Activated T-helper 1 cell treated with anti-CD3 and anti-CD28 coated beads, Interleukin-12 subunit alpha, Interleukin-12 subunit beta, Interleukin-2, Interleukin-4 antibody, amounts not matched to agents 30 ng/mL and 10 ng/mL and 1 ng/mL, durations not matched to agents 14 hours and 24 hours and 36 hours (primary cell): ENCODE measurements at regions of chr1 and their contacts with region 1.

Region 1: DNA sequence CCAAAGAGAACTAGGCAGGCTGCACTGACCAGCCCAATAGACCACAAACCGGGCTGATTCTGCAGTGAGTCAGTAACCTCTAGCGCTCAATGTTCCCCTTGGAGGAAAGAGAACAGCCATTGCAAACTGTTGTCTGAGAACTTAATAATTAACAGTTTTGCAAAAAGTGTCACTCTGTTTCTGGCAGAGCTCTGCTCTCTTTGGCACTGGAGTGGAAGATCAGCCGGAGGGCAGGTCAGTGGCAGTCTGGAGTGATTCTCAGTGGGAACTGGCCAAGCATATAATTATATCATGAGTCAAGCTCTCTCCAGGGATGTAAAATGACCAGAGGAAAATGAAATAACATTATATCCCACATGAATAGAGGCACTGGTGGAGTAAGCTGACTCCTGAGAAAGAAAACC is 238.3 kb downstream of the HLX start:
- DNase-seq: no peak
- H3K4me3 Mint-ChIP-seq: no peak overlapping the region
- H3K27ac Mint-ChIP-seq: no peak overlapping the region
- H3K4me1 Mint-ChIP-seq: no peaks in the 10 kb centered on the region
- H3K27me3 Mint-ChIP-seq: peaks cover 1% of the 10 kb centered on the region

Region 2: DNA sequence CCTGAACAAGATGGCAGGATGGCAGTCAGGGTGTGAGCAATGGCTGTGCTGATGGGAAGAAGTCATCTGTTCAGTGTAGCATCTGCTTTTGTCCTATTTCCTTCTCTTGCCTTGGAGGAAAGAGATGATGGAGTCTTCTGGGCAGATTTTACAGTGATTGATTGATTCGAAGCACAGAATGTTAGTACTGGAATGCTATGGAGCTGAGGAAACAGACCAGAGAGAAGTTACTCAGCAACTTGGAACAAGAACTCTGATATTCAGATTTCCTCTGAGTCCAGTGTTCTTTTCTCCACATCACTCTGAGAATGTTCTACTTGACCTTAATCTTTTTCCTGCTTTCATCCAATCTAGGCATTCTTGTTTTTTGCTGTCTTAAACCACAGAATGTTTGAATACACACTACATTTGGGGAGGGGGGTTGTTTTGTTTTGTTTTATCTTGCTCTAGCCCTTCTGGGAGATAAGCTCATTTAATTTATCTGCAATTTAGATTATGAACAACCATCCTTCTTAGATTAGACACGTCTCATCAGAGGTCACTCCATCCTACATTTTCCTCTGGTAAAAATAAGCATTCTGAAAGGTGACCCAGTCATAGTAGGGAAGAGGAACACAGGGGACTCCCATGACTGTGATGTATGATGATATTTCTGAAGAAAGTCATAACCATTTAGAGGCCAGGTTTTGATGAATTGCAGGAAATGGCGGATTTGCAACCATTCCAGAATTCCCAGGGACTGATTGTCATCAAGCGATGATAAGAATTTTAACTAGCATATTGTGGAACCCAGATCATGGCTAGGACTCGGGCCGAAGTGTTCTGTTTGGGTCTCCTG is 48.0 kb after region 1 on chr1:
- intact Hi-C with region 1: loop called (anchors 1 kb)
- DNase-seq: no peak
- H3K4me3 Mint-ChIP-seq: no peak overlapping the region
- H3K27ac Mint-ChIP-seq: no peak overlapping the region
- H3K4me1 Mint-ChIP-seq: no peaks in the 10 kb centered on the region
- H3K27me3 Mint-ChIP-seq: peaks cover 2% of the 10 kb centered on the region

Region 3: DNA sequence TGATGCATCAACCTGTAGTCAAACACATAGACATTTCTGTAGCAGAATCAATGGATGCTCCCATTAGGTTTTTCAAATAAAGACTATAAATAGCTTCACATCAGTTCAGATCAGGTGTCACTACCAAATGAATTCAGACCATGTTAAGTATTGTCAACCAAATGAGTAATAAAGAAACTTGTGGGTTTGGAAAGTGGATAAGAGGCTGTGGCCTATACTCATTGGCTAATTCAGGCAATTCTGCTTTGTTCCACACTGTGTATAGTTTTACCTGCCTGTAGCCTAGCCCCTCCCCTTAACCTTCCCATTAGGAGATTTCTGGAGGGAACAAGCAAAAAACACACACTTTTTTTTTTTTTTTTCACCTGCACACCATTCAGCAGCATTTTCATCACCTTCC is 82.9 kb after region 1 on chr1:
- intact Hi-C with region 1: no loop called
- DNase-seq: no peak
- H3K4me3 Mint-ChIP-seq: no peak overlapping the region
- H3K27ac Mint-ChIP-seq: no peak overlapping the region
- H3K4me1 Mint-ChIP-seq: peaks cover 9% of the 10 kb centered on the region
- H3K27me3 Mint-ChIP-seq: peaks cover 2% of the 10 kb centered on the region

Region 4: GRCh38 chr1:221394011-221394544 is 276.5 kb after region 1 on chr1:
- intact Hi-C with region 1: no loop called
- DNase-seq: no peak
- H3K4me3 Mint-ChIP-seq: no peak overlapping the region
- H3K27ac Mint-ChIP-seq: no peak overlapping the region
- H3K4me1 Mint-ChIP-seq: no peaks in the 10 kb centered on the region
- H3K27me3 Mint-ChIP-seq: peaks cover 2% of the 10 kb centered on the region